Common myeloid progenitor, CD34-positive (primary cell): ENCODE measurements at regions of chr12 and their contacts with region 1.

Region 1: DNA sequence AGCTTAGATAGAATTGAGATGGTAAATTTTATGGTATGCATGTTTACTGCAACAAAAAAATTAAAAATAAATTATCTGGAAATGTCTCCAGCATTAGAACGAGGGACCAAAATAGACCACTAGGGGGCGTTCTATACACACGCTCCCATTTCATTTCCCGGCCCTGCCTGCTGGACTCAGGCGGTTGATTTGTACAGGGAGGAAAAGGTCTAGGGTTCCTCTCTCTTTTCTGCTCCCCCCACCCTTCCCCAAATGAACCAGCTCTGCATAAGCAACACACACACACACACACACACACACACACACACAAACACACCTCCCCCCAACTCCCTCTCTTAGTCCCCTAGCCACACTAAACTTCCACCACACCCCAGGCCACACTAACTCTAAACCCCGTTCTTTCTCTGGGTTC is 7.8 kb upstream of the DTX1 start:
- DNase-seq: peak; percentile 64 to 81 (median 73)
- H3K4me3 ChIP-seq: no peak overlapping the region
- H3K27ac ChIP-seq: no peak overlapping the region
- H3K4me1 ChIP-seq: peaks cover 0 to 14% (median 5%) of the 10 kb centered on the region in 4 experiments
- H3K27me3 ChIP-seq: peaks cover 0 to 2% (median 0%) of the 10 kb centered on the region in 5 experiments

Region 2: DNA sequence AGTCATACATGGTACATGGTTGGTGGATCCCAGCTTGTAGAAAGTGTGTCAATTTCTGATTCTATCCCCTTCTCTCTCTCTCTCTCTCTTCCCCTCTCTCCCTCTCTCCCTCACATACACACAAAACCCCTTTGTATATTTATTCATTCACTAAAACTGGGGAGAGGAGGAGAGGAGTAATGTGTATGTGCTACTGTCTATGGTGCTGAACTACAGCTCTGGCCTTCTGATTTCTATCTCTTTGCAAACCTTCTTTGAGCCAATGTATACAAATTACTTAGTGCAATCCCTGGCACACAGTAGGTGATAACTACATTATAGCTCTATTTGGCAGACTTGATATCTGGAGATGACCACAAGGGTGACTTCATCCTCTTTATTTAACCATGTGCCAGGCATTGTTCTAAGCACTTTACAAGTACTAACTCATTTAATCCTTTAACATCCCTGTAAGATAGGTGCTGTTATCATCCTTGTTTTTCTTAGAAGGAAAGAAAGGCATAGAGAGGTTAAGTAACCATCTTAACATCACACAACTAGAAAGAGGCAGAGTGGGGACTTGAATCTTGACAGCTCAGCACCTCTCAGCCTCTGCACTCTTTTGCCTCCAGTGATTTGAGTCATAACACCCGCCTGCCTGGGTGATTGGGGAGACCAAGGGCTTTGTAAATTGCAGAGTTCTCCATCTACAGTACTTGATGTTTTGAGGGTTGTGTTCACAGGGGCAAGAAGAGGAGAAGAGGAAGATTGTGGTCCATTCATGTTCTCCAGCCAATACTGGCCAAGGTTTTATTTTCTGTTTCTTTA is 235.9 kb before region 1 on chr12:
- CTCF ChIA-PET with region 1: no interaction called
- POLR2A ChIA-PET with region 1: no interaction called
- DNase-seq: no peak
- H3K4me3 ChIP-seq: no peak overlapping the region
- H3K27ac ChIP-seq: no peak overlapping the region
- H3K4me1 ChIP-seq: peaks cover 0 to 15% (median 0%) of the 10 kb centered on the region in 4 experiments
- H3K27me3 ChIP-seq: no peaks in the 10 kb centered on the region

Region 3: DNA sequence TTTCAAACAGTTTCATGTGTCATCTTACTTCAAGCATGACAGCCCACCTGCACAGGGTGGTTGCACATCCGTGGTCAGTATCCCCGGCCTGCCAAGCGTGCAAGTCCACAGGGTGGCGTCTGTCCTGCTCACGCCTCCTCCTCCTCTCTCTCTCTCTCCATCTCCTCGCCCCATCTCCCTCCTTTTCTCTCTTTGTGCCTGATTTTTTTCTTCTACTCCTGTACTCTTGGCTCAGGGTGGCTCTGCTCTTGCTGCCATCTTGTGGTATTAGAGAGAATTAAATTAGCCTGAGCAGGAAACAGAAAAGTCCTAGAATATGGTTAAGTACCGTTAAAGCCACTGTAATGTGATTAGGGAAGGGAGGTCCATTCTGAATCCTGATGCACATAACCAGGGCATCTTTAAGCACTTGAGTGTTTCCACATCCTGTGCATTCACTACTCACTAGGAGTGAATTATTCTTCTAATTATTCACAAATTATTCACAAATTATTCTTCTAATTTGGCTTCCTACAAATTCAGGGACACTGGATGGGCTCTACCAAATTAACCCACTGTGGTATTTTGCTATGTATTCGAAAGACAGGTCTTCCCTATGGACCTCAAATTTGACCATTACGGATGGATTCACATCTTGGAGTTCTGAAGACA is 17.7 kb before region 1 on chr12:
- CTCF ChIA-PET with region 1: interaction called, 19 read pairs
- POLR2A ChIA-PET with region 1: no interaction called
- DNase-seq: peak; percentile 43 to 67 (median 58)
- H3K4me3 ChIP-seq: no peak overlapping the region
- H3K27ac ChIP-seq: no peak overlapping the region
- H3K4me1 ChIP-seq: no peaks in the 10 kb centered on the region
- H3K27me3 ChIP-seq: no peaks in the 10 kb centered on the region

Region 4: GRCh38 chr12:113065126-113066007 is 16.6 kb after region 1 on chr12:
- CTCF ChIA-PET with region 1: interaction called, 52 read pairs
- POLR2A ChIA-PET with region 1: no interaction called
- DNase-seq: peak in 2 of 3 donors; percentile 57 to 64
- H3K4me3 ChIP-seq: no peak overlapping the region
- H3K27ac ChIP-seq: no peak overlapping the region
- H3K4me1 ChIP-seq: peaks cover 0 to 42% (median 17%) of the 10 kb centered on the region in 4 experiments
- H3K27me3 ChIP-seq: peaks cover 0 to 5% (median 0%) of the 10 kb centered on the region in 5 experiments

Region 5: GRCh38 chr12:113092607-113093408 is 44.1 kb after region 1 on chr12:
- CTCF ChIA-PET with region 1: interaction called, 76 read pairs
- POLR2A ChIA-PET with region 1: no interaction called
- DNase-seq: peak; percentile 34 to 55 (median 54)
- H3K4me3 ChIP-seq: peak overlapping the region in 4 of 7 experiments; percentile 26 to 66 (median 44)
- H3K27ac ChIP-seq: no peak overlapping the region
- H3K4me1 ChIP-seq: peaks cover 0 to 8% (median 2%) of the 10 kb centered on the region in 4 experiments
- H3K27me3 ChIP-seq: peaks cover 0 to 9% (median 0%) of the 10 kb centered on the region in 5 experiments

Region 6: GRCh38 chr12:113098446-113098896 is 49.7 kb after region 1 on chr12:
- CTCF ChIA-PET with region 1: interaction called, 76 read pairs
- POLR2A ChIA-PET with region 1: interaction called, 3 read pairs
- DNase-seq: peak; percentile 72 to 79 (median 79)
- H3K4me3 ChIP-seq: no peak overlapping the region
- H3K27ac ChIP-seq: no peak overlapping the region
- H3K4me1 ChIP-seq: peaks cover 0 to 6% (median under 1%) of the 10 kb centered on the region in 4 experiments
- H3K27me3 ChIP-seq: peaks cover 0 to under 1% (median 0%) of the 10 kb centered on the region in 5 experiments

Region 7: GRCh38 chr12:113152835-113153814 is 104.4 kb after region 1 on chr12:
- CTCF ChIA-PET with region 1: interaction called, 11 read pairs
- POLR2A ChIA-PET with region 1: no interaction called
- DNase-seq: peak; percentile 74 to 88 (median 87)
- H3K4me3 ChIP-seq: peak overlapping the region; percentile 23 to 67 (median 61)
- H3K27ac ChIP-seq: no peak overlapping the region
- H3K4me1 ChIP-seq: peaks cover 0 to 51% (median 45%) of the 10 kb centered on the region in 4 experiments
- H3K27me3 ChIP-seq: peaks cover 0 to 32% (median 12%) of the 10 kb centered on the region in 5 experiments

Region 8: DNA sequence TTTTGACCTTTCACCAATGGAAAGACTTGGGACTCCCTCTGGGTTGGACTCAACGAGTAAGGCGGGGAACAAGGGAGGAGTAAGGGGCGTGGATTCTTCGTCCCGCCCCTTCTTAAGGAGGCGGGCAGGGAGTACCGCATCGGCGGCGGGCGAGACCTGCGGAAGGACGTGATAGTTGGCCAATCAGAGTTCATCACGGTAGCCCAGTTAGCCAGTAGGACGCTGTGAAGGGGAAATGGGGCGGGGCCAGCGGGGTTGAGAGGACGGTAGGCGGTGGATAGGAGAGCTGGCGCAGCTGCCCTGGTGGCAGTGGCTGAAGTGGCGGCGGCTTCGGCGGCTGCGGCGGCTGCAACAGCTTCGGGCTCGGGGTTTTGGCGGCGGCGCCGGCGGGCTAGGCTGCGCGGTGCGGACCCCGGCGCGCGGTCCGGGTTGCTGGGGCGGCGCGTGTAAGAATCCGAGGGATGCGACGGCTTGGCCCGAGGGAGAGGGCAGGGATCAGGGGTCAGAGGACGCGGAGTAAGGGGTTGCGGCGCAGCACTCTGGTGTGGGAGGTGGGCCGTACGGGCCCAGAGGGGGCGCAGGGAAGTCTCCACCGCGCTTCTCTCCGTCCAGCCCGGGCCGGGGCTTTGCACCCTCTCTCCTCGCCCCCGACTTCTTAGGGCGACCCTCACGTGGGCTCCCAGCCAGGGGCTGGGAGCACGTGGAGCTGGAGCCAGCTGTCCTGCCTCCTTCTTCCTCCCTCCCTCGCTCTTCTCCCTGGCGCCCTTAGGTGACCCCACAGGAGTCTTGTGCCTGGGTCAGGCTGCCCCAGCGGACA is 172.7 kb after region 1 on chr12 and contains the start of gene TPCN1:
- CTCF ChIA-PET with region 1: no interaction called
- POLR2A ChIA-PET with region 1: no interaction called
- DNase-seq: peak; percentile 100
- H3K4me3 ChIP-seq: peak within 1 kb of the TSS; percentile 57 to 95 (median 74)
- H3K27ac ChIP-seq: peak within 1 kb of the TSS in 1 of 2 experiments; percentile 75
- H3K4me1 ChIP-seq: peaks cover 4 to 29% (median 27%) of the 10 kb centered on the region in 4 experiments
- H3K27me3 ChIP-seq: no peaks in the 10 kb centered on the region